HepG2 (cell line): ENCODE measurements at regions of chr6 and their contacts with region 1.

Region 1: GRCh38 chr6:128339635-128340450 is 180.6 kb downstream of the PTPRK start:
- DNase-seq: peak; percentile 79
- ATAC-seq: peak; percentile 90
- H3K4me3 ChIP-seq: peak overlapping the region in 1 of 3 experiments; percentile 7; a peak in 1 of 6 replicates
- H3K27ac ChIP-seq: peak overlapping the region; percentile 59
- H3K4me1 ChIP-seq: peaks cover 69% of the 10 kb centered on the region
- H3K27me3 ChIP-seq: no peaks in the 10 kb centered on the region
- CTCF ChIP-seq: no peak
- EP300 ChIP-seq: peak in 1 of 2 experiments; percentile 56; a peak in 2 of 4 replicates
- POLR2A ChIP-seq: no peak
- RAD21 ChIP-seq: 0 out of 2 replicates have a peak, but pooled peaks have one; percentile 11

Region 2: GRCh38 chr6:128068116-128068479 is 271.7 kb before region 1 on chr6:
- CTCF ChIA-PET with region 1: no interaction called
- POLR2A ChIA-PET with region 1: interaction called, 3 read pairs
- in situ Hi-C with region 1: no loop called
- intact Hi-C with region 1: loop called (anchors 10 kb)
- DNase-seq: peak; percentile 32
- ATAC-seq: peak; percentile 37; the same call in 2 of the 3 replicates
- H3K4me3 ChIP-seq: no peak overlapping the region
- H3K27ac ChIP-seq: peak overlapping the region; percentile 37
- H3K4me1 ChIP-seq: peaks cover 33% of the 10 kb centered on the region
- H3K27me3 ChIP-seq: no peaks in the 10 kb centered on the region
- CTCF ChIP-seq: 0 out of 2 replicates have a peak, but pooled peaks have one; percentile 16
- EP300 ChIP-seq: no peak
- POLR2A ChIP-seq: no peak
- RAD21 ChIP-seq: no peak

Region 3: GRCh38 chr6:128478230-128479045 is 138.6 kb after region 1 on chr6:
- CTCF ChIA-PET with region 1: no interaction called
- POLR2A ChIA-PET with region 1: no interaction called
- in situ Hi-C with region 1: no loop called
- intact Hi-C with region 1: no loop called
- DNase-seq: no peak
- ATAC-seq: peak; percentile 41; the same call in 2 of the 3 replicates
- H3K4me3 ChIP-seq: no peak overlapping the region
- H3K27ac ChIP-seq: no peak overlapping the region
- H3K4me1 ChIP-seq: peaks cover 36% of the 10 kb centered on the region
- H3K27me3 ChIP-seq: no peaks in the 10 kb centered on the region
- CTCF ChIP-seq: no peak
- EP300 ChIP-seq: no peak
- POLR2A ChIP-seq: no peak
- RAD21 ChIP-seq: no peak